ENCODE measurements at regions of chr11 and their contacts with region 1.

Region 1: GRCh38 chr11:33362051-33362910 is 105.1 kb downstream of the HIPK3 start:
- DNase-seq: no peak
- H3K4me3 ChIP-seq: no peak overlapping the region
- H3K27ac ChIP-seq: no peak overlapping the region
- H3K4me1 ChIP-seq: no peaks in the 10 kb centered on the region
- H3K27me3 ChIP-seq: no peaks in the 10 kb centered on the region
- CTCF ChIP-seq: peak; percentile 42 to 84 (median 60)
- POLR2A ChIP-seq: no peak

Region 2: DNA sequence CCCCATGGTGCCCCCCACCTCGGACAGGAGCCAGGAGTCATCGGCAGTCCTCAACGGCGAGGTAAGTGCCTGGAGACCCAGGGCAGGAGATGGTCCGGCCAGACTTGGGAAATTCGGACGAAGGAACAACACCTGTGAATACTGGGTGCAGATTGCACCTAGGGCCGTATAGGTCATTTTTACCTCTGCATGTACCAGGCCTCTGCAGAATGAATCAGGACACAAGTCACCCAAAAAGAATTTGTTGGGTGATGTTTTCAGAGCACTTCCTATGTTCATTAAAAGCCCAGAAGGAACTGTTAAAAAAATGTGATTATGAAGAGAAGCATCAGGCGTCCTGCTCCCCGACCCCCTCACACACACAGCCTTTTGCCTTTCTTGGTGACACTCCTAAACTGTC is 244.5 kb after region 1 on chr11:
- intact Hi-C with region 1: no loop called
- DNase-seq: no peak
- H3K4me3 ChIP-seq: no peak overlapping the region
- H3K27ac ChIP-seq: no peak overlapping the region
- H3K4me1 ChIP-seq: no peaks in the 10 kb centered on the region
- H3K27me3 ChIP-seq: no peaks in the 10 kb centered on the region
- CTCF ChIP-seq: no peak
- POLR2A ChIP-seq: no peak

Region 3: DNA sequence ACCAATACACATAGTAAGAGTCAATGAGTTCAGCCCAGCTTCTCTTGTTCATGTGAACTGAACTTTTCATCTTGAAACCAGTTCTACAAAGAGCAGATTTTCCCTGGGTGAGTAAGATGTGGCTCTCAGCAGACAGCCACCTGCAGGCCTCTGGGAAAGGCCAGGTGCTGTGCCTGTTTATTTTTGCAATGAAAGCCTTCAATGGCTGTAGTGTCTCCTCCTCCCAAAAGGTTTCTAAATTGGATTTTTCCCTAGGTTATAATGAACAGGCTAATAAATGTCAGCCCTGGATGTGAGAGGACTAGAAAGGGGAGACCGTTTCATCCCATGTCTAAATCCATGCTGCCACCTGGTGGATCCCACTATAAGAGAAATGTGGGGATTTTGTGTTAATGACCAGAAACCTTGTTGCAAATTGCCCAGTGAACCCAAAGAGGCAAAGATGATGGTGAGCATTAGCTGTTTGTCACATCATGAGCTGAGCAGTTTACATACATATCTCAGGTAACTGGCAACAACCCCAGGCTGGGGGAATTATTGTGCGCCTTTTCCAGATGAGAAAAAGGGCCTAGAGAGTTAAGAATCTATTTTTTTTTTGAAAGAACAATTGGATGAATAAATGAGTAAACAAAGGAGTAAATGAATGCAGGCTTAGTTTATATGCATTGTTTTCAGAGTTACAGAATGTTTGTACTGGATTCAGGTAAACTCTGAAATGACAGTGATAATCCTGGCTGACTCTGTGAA is 325.6 kb after region 1 on chr11:
- intact Hi-C with region 1: loop called (anchors 10 kb)
- DNase-seq: peak; percentile 80
- H3K4me3 ChIP-seq: no peak overlapping the region
- H3K27ac ChIP-seq: no peak overlapping the region
- H3K4me1 ChIP-seq: peaks cover 17% of the 10 kb centered on the region
- H3K27me3 ChIP-seq: no peaks in the 10 kb centered on the region
- CTCF ChIP-seq: peak; percentile 63 to 75 (median 75)
- POLR2A ChIP-seq: no peak